Caki2 (cell line): ENCODE measurements at regions of chr17 and their contacts with region 1.

Region 1: GRCh38 chr17:80147035-80147836 is at the start of gene EIF4A3:
- DNase-seq: peak; percentile 98
- total RNA-seq, gene EIF4A3: 233 and 234 TPM in 2 replicates

Region 2: DNA sequence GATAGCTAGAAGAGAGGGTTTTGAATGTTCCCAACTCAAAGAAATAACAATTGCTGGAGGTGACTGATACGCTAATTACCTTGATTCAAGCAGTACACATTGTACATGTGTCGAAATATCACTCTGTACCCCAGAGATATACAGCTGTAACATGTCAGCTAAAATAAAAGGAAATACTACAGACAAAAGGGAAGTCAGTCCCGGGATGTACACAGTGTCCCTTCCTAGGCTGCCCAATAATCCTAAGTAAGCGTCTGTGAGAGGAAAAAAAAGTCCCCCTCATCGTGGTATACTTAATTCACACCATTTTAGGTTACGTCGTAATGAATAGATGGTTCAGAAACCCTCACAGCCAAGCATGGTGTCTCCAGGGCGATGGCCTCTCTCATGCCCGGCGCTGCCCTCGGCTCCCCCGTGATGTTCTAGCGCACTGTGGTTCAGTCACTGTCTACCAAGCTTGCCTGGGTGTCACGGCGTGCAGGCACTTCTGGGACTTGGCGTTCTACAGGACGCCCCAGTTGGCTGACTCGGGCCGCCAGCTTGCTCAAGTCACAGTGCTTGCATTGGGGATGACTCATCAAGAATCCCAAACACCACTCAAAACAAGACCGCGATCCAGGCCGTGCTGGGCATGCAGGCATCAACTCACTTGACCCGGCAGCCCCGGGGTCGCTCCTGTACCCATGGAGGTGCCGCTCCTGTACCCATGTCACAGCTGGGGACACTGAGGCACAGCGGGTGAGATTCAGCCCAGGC is 83.2 kb before region 1 on chr17:
- in situ Hi-C with region 1: loop called (anchors 10 kb)
- DNase-seq: peak; percentile 86